Transverse colon (tissue), 4 donors: ENCODE measurements at regions of chr11 and their contacts with region 1.

Region 1: GRCh38 chr11:73965076-73965860 is 14.4 kb downstream of the DNAJB13 start:
- DNase-seq: no peak
- H3K4me3 ChIP-seq: no peak overlapping the region
- H3K27ac ChIP-seq: no peak overlapping the region
- H3K4me1 ChIP-seq: peaks cover 0 to 10% (median 3%) of the 10 kb centered on the region in 4 donors
- H3K27me3 ChIP-seq: no peaks in the 10 kb centered on the region
- CTCF ChIP-seq: no peak
- EP300 ChIP-seq: no peak
- POLR2A ChIP-seq: no peak

Region 2: DNA sequence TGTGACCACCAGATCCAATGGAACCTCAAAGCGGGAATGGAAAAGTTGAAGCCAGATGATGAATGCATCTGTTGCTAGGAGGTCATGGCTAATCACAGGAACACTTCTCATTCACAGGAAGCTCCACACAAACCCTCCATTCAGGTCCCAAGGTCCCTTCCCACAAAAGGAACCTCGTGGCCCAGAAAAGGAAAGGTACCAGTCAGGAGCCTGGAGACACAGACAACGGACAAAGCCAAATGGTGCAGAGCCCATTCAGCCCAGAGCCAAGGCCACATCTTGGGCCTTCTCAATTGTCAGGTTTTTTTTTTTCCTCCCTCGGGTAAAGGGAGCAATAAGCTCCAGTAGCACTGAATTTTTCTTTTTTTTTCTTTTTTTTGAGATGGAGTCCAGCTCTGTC is 454.4 kb before region 1 on chr11:
- in situ Hi-C with region 1: no loop called
- intact Hi-C with region 1: no loop called
- DNase-seq: no peak
- H3K4me3 ChIP-seq: no peak overlapping the region
- H3K27ac ChIP-seq: no peak overlapping the region
- H3K4me1 ChIP-seq: no peaks in the 10 kb centered on the region
- H3K27me3 ChIP-seq: no peaks in the 10 kb centered on the region
- CTCF ChIP-seq: no peak
- EP300 ChIP-seq: no peak
- POLR2A ChIP-seq: no peak

Region 3: DNA sequence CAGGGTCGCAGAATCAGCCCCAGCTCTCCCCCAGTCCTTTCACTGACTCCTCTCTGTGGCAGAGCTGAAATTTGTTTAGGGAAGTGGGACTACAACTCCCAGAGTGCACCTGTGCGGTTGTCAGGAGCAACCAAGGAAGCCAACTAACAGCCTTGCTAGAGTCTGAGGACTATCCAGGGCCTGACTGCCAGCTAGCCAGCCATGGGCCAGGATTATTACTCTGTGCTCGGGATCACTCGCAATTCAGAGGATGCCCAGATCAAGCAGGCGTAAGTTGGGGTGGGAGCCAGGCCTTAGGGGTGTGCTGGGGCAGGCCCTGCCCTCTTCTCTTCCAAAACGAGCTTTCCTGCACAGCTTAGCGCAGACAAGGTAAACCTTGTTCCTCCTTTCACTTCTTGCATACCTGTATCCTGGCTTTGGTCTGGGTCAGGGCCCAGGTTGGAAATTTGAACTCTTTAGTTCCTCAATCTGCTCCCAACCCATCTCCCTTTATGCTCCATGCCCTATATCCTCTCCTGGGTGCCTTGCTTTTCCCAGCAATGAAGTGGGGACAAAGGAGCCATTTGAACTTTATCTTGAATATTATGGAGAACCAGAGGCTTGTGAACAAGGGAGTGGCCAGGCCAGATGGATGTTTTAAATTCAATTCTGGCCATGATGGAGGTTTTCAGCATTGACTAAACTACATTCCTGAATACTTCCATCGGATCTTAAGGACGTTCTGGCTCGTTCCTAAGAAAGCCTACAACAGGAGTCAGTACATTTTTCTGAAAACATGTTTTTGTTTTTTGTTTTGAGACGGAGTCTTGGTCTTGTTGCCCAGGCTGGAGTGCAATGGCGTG is 14.2 kb before region 1 on chr11 and contains the start of gene DNAJB13:
- in situ Hi-C with region 1: no loop called
- intact Hi-C with region 1: no loop called
- DNase-seq: peak; percentile 44
- H3K4me3 ChIP-seq: no peak within 1 kb of the TSS
- H3K27ac ChIP-seq: no peak within 1 kb of the TSS
- H3K4me1 ChIP-seq: no peaks in the 10 kb centered on the region
- H3K27me3 ChIP-seq: no peaks in the 10 kb centered on the region
- CTCF ChIP-seq: no peak
- EP300 ChIP-seq: no peak
- POLR2A ChIP-seq: no peak
- total RNA-seq, gene DNAJB13: not detected

Region 4: GRCh38 chr11:74024261-74025029 is 59.2 kb after region 1 on chr11:
- in situ Hi-C with region 1: no loop called
- intact Hi-C with region 1: loop called (anchors 10 kb)
- DNase-seq: peak; percentile 33
- H3K4me3 ChIP-seq: no peak overlapping the region
- H3K27ac ChIP-seq: peak overlapping the region in 1 of 4 donors; percentile 15
- H3K4me1 ChIP-seq: peaks cover 3 to 20% (median 9%) of the 10 kb centered on the region in 4 donors
- H3K27me3 ChIP-seq: no peaks in the 10 kb centered on the region
- CTCF ChIP-seq: no peak
- EP300 ChIP-seq: no peak
- POLR2A ChIP-seq: no peak

Region 5: GRCh38 chr11:74102321-74102720 is 137.1 kb after region 1 on chr11:
- in situ Hi-C with region 1: loop called in 1 of 4 experiments (anchors 25 kb)
- intact Hi-C with region 1: loop called (anchors 10 kb)
- DNase-seq: no peak
- H3K4me3 ChIP-seq: no peak overlapping the region
- H3K27ac ChIP-seq: no peak overlapping the region
- H3K4me1 ChIP-seq: no peaks in the 10 kb centered on the region
- H3K27me3 ChIP-seq: no peaks in the 10 kb centered on the region
- CTCF ChIP-seq: no peak
- EP300 ChIP-seq: no peak
- POLR2A ChIP-seq: no peak